Psoas muscle (tissue), 8 donors: ENCODE measurements at regions of chr19 and their contacts with region 1.

Region 1: GRCh38 chr19:6279931-6280591 is at the start of gene MLLT1:
- DNase-seq: peak; percentile 98 to 99
- ATAC-seq: peak; percentile 97 to 98 (median 97)
- H3K4me3 ChIP-seq: peak within 1 kb of the TSS; percentile 93
- H3K27ac ChIP-seq: peak within 1 kb of the TSS; percentile 86
- H3K4me1 ChIP-seq: peaks cover 35% of the 10 kb centered on the region
- H3K27me3 ChIP-seq: no peaks in the 10 kb centered on the region
- CTCF ChIP-seq: peak; percentile 80
- total RNA-seq, gene MLLT1: 35.8 to 51.7 (median 44.0) TPM

Region 2: GRCh38 chr19:5977785-5978605 is 302.1 kb before region 1 on chr19 and contains the start of gene RANBP3:
- intact Hi-C with region 1: loop called in 1 of 2 experiments (anchors 10 kb)
- DNase-seq: peak; percentile 99 to 100
- ATAC-seq: peak; percentile 98 to 99 (median 98)
- H3K4me3 ChIP-seq: peak within 1 kb of the TSS; percentile 96
- H3K27ac ChIP-seq: peak within 1 kb of the TSS; percentile 92
- H3K4me1 ChIP-seq: peaks cover 29% of the 10 kb centered on the region
- H3K27me3 ChIP-seq: no peaks in the 10 kb centered on the region
- CTCF ChIP-seq: no peak
- total RNA-seq, gene RANBP3: 48.4 to 50.0 (median 48.9) TPM